ENCODE measurements at regions of chr6 and their contacts with region 1.

Region 1: DNA sequence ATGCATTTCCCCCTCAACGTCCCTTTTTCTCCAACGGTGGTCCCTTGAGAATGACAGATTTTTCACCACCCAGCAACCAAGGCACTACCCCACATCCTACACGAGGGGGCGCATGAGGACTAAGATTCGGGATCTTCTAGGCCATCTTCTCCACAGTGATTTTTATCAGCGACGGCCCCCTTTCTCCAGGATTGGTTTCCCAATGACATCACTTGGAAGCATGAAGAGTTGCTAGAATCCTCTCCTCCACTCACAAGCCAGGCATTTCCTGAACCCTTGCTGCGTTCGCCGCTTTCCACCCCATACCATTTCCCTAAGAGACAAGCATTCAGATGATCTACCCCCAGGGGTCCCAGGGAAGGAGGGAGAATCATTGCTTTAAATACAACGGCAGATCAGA is 252.0 kb downstream of the HIVEP2 start:
- DNase-seq: peak; percentile 42
- H3K4me3 Mint-ChIP-seq: no peak overlapping the region
- H3K27ac Mint-ChIP-seq: no peak overlapping the region
- H3K4me1 Mint-ChIP-seq: peaks cover 22% of the 10 kb centered on the region
- H3K27me3 Mint-ChIP-seq: no peaks in the 10 kb centered on the region

Region 2: GRCh38 chr6:142474531-142475289 is 218.2 kb before region 1 on chr6:
- intact Hi-C with region 1: loop called (anchors 2 kb)
- DNase-seq: no peak
- H3K4me3 Mint-ChIP-seq: no peak overlapping the region
- H3K27ac Mint-ChIP-seq: no peak overlapping the region
- H3K4me1 Mint-ChIP-seq: peaks cover 7% of the 10 kb centered on the region
- H3K27me3 Mint-ChIP-seq: peaks cover 7% of the 10 kb centered on the region

Region 3: DNA sequence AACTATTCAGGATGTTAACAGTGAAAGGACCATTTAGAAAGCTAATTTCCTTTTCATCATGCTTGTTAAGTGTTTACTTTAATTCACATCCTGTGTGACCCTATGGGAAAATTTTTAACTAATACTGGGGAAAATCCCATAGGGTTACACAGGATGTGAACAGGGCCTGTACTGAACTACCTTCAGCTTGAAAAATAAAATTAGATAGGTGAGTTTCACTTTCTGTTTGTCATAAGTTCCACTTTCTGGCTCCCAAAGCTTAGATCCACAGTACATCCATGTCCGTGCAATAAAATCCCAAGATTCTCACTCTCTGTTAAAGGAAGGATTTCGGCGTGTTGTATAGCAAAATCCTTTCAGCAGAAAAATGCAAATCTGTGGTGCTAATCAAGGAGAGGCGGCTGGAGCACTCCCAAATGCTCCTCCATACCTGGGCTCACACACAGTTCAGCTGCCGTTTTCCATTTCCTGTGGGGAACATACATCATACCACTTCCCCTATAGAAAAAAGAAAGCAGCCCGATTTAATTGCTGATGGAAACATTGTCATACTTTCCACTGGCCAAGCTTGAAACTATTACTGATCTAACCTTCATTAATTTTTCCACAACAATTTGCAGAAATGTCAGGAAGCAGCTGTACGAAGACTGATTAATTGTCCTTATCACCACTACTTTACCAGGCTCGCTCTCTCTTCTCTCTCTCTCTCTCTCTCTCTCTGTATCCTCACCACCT is 126.8 kb after region 1 on chr6:
- intact Hi-C with region 1: loop called (anchors 5 kb)
- DNase-seq: peak; percentile 50
- H3K4me3 Mint-ChIP-seq: peak overlapping the region; percentile 85
- H3K27ac Mint-ChIP-seq: peak overlapping the region; percentile 98
- H3K4me1 Mint-ChIP-seq: peaks cover 75% of the 10 kb centered on the region
- H3K27me3 Mint-ChIP-seq: peaks cover 3% of the 10 kb centered on the region

Region 4: GRCh38 chr6:143026696-143027449 is 333.9 kb after region 1 on chr6:
- intact Hi-C with region 1: loop called (anchors 1 kb)
- DNase-seq: peak; percentile 9
- H3K4me3 Mint-ChIP-seq: no peak overlapping the region
- H3K27ac Mint-ChIP-seq: no peak overlapping the region
- H3K4me1 Mint-ChIP-seq: peaks cover 11% of the 10 kb centered on the region
- H3K27me3 Mint-ChIP-seq: no peaks in the 10 kb centered on the region

Region 5: DNA sequence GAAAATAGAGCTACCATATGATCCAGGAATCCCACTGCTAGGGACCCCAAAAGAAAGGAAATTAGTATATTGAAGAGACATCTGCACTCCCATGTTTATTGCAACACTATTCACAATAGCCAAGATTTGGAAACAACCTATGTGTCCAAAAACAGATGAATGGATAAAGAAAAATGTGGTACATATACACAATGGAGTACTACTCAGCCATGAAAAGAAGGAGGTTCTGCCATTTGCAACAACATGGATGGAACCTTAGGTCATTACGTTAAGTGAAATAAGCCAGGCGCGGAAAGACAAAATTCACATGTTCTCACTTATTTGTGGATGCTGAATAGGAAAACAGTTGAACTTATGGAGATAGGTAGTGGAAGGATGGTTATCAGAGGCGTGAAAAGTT is 620.2 kb after region 1 on chr6:
- intact Hi-C with region 1: no loop called
- DNase-seq: no peak
- H3K4me3 Mint-ChIP-seq: no peak overlapping the region
- H3K27ac Mint-ChIP-seq: no peak overlapping the region
- H3K4me1 Mint-ChIP-seq: no peaks in the 10 kb centered on the region
- H3K27me3 Mint-ChIP-seq: no peaks in the 10 kb centered on the region

Region 6: DNA sequence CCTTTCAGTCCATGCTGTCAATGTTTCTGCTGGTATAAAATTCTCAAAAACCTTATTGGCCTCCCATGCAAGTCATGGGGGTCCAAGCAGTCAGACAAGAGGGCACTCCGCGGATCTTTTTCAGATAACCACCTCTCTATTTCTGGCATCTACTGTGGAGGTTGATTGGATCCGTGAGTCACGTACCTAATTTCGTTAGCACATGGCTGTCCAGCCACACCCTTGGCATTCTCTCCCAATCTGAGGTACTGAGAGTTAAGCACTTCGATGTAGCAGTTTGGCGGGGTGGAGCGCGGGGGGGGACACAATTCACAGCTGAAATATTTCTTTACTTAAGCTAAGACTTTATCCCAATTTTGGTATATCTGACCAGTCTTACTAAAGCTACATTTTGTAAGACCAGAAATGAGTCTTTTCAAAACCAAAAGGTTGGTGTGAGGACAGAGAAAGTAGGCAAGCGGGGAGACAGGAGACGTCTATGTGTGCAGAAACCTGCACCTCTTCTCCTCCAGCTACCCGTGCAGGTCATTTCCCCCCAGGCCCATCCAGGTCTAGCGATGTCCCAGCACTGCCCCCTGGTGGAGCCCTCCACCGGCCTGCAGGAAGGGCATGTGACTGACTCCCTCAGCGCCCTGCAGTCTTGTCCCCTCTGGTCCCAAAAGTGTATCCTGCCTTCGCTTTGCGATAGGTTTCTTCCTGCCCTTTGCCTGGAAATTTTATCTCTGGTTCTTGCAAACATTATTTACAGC is 644.4 kb after region 1 on chr6:
- intact Hi-C with region 1: loop called (anchors 1 kb)
- DNase-seq: peak; percentile 14
- H3K4me3 Mint-ChIP-seq: no peak overlapping the region
- H3K27ac Mint-ChIP-seq: no peak overlapping the region
- H3K4me1 Mint-ChIP-seq: peaks cover 4% of the 10 kb centered on the region
- H3K27me3 Mint-ChIP-seq: no peaks in the 10 kb centered on the region

Region 7: GRCh38 chr6:143441680-143442545 is 749.0 kb after region 1 on chr6:
- intact Hi-C with region 1: loop called (anchors 5 kb)
- DNase-seq: peak; percentile 13
- H3K4me3 Mint-ChIP-seq: peak overlapping the region; percentile 53
- H3K27ac Mint-ChIP-seq: peak overlapping the region; percentile 91
- H3K4me1 Mint-ChIP-seq: peaks cover 61% of the 10 kb centered on the region
- H3K27me3 Mint-ChIP-seq: no peaks in the 10 kb centered on the region